ENCODE measurements at regions of chr5 and their contacts with region 1.

Region 1: DNA sequence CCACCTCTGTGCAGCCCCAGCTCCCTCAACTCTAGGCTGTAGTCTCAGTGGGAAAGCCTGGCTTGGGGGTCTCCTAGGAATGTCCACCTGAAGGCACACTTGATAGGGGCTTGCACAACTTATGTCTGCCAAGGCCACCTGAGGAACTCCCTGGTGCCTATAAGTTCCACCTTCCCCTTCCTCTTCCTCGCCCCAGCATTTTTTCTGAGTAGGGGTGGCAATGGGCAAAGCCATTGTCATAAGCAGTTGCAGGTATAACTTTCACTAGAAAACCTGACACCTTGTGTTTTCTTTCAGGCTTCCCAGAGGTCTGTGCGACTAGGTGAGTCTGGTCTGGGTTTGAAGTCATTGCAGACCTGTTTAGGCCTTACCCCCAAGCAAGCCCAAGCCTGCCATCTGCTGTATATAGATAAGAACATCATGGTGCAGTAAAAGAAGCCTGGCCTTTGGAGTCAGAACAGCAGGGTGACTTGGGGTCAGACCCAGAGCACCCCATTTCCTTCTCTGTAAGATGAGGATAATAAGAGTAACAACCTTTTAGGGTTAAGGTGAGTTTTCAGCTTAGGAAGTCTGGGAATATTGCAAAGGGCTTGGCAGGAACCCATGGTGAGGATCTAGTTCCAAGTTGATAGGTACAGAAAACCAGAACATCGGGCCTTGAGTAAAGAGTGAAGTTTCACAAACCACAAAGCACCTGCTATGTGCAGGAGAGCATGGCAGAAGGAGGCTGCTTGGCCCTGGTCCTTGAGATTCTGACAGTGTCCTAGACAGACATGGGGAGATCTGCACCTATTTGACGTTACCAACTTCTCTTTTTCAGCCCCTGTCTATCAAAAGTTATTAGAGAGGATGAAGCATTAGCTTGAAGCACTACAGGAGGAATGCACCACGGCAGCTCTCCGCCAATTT is 33.8 kb downstream of the TGFBI start:
- DNase-seq: peak; percentile 68 to 69
- H3K4me3 ChIP-seq: no peak overlapping the region
- H3K4me3 Mint-ChIP-seq: no peak overlapping the region
- H3K27ac Mint-ChIP-seq: no peak overlapping the region
- H3K4me1 ChIP-seq: peaks cover 30% of the 10 kb centered on the region
- H3K4me1 Mint-ChIP-seq: peaks cover 44% of the 10 kb centered on the region
- H3K27me3 ChIP-seq: no peaks in the 10 kb centered on the region
- H3K27me3 Mint-ChIP-seq: no peaks in the 10 kb centered on the region
- CTCF ChIP-seq: peak; percentile 53 to 56

Region 2: DNA sequence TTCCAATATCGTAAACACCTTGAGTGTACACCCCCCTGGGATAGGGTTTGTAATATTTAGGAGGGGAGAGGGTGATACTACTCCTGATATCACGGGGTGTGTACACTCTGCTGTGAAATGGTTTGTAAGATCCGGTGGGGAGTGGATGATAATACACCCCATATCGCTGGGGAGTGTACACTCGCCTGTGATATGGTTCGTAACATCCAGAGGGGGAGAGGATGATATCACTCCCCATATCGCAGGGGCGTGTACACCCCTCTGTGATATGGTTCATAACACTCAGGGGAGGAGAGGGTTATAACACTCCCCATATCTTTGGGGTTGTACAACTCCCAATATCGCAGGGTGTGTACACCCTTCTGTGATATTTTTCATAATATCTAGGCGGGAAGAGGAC is 262.0 kb before region 1 on chr5:
- CTCF ChIA-PET with region 1: no interaction called
- POLR2A ChIA-PET with region 1: no interaction called
- intact Hi-C with region 1: no loop called
- DNase-seq: no peak
- H3K4me3 ChIP-seq: no peak overlapping the region
- H3K4me3 Mint-ChIP-seq: no peak overlapping the region
- H3K27ac Mint-ChIP-seq: no peak overlapping the region
- H3K4me1 ChIP-seq: no peaks in the 10 kb centered on the region
- H3K4me1 Mint-ChIP-seq: no peaks in the 10 kb centered on the region
- H3K27me3 ChIP-seq: no peaks in the 10 kb centered on the region
- H3K27me3 Mint-ChIP-seq: peaks cover 18% of the 10 kb centered on the region
- CTCF ChIP-seq: no peak

Region 3: DNA sequence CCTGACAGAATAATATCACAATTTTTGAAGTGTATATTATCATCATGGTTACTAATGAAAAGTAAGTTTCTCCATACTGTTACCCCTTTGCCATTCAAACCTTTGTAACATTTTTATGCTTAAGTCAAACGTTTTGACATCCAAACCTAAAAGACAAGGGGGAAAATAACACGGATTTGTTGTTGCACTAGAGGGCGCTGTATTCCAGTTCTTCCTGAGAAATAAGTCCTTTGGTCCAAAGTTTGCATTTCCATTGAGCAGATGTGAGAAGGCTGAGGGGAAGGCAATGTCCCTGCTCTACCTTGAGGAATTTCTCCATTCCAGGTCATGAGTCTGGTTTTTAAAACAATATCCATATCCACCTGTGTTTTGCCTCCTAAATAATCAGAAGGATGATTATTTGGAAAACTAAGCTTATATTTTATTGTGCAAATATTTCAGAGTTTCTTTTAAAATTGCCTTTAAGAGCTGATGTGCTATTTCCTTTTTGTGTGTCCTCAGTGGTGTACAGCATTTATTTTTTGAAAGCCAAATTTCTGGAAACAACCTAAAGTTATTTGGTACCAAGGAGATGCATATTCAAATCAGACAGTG is 117.6 kb before region 1 on chr5:
- CTCF ChIA-PET with region 1: interaction called, 3 read pairs
- POLR2A ChIA-PET with region 1: no interaction called
- intact Hi-C with region 1: loop called (anchors 1 kb)
- DNase-seq: peak; percentile 60 to 76
- H3K4me3 ChIP-seq: no peak overlapping the region
- H3K4me3 Mint-ChIP-seq: no peak overlapping the region
- H3K27ac Mint-ChIP-seq: no peak overlapping the region
- H3K4me1 ChIP-seq: peaks cover under 1% of the 10 kb centered on the region; the same call in 1 of the 2 replicates
- H3K4me1 Mint-ChIP-seq: no peaks in the 10 kb centered on the region
- H3K27me3 ChIP-seq: no peaks in the 10 kb centered on the region
- H3K27me3 Mint-ChIP-seq: no peaks in the 10 kb centered on the region
- CTCF ChIP-seq: peak; percentile 79 to 80

Region 4: GRCh38 chr5:136014049-136015002 is 48.3 kb before region 1 on chr5:
- CTCF ChIA-PET with region 1: interaction called, 3 read pairs
- POLR2A ChIA-PET with region 1: no interaction called
- intact Hi-C with region 1: loop called (anchors 5 kb)
- DNase-seq: no peak
- H3K4me3 ChIP-seq: no peak overlapping the region
- H3K4me3 Mint-ChIP-seq: no peak overlapping the region
- H3K27ac Mint-ChIP-seq: no peak overlapping the region
- H3K4me1 ChIP-seq: 0 out of 2 replicates have a peak, but pooled peaks cover 3% of the 10 kb centered on the region
- H3K4me1 Mint-ChIP-seq: no peaks in the 10 kb centered on the region
- H3K27me3 ChIP-seq: no peaks in the 10 kb centered on the region
- H3K27me3 Mint-ChIP-seq: peaks cover 3% of the 10 kb centered on the region
- CTCF ChIP-seq: no peak

Region 5: GRCh38 chr5:136082390-136083193 is 20.0 kb after region 1 on chr5:
- CTCF ChIA-PET with region 1: interaction called, 3 read pairs
- POLR2A ChIA-PET with region 1: no interaction called
- intact Hi-C with region 1: loop called (anchors 1 kb)
- DNase-seq: peak; percentile 78 to 85
- H3K4me3 ChIP-seq: no peak overlapping the region
- H3K4me3 Mint-ChIP-seq: no peak overlapping the region
- H3K27ac Mint-ChIP-seq: no peak overlapping the region
- H3K4me1 ChIP-seq: peaks cover 11% of the 10 kb centered on the region
- H3K4me1 Mint-ChIP-seq: no peaks in the 10 kb centered on the region
- H3K27me3 ChIP-seq: no peaks in the 10 kb centered on the region
- H3K27me3 Mint-ChIP-seq: no peaks in the 10 kb centered on the region
- CTCF ChIP-seq: peak; percentile 88

Region 6: GRCh38 chr5:136174021-136174659 is 111.5 kb after region 1 on chr5:
- CTCF ChIA-PET with region 1: interaction called, 8 read pairs
- POLR2A ChIA-PET with region 1: no interaction called
- intact Hi-C with region 1: loop called (anchors 1 kb)
- DNase-seq: peak in 1 of 2 experiments; percentile 63
- H3K4me3 ChIP-seq: no peak overlapping the region
- H3K4me3 Mint-ChIP-seq: no peak overlapping the region
- H3K27ac Mint-ChIP-seq: no peak overlapping the region
- H3K4me1 ChIP-seq: no peaks in the 10 kb centered on the region; the same call in 1 of the 2 replicates
- H3K4me1 Mint-ChIP-seq: peaks cover 6% of the 10 kb centered on the region
- H3K27me3 ChIP-seq: no peaks in the 10 kb centered on the region
- H3K27me3 Mint-ChIP-seq: no peaks in the 10 kb centered on the region
- CTCF ChIP-seq: peak; percentile 68 to 84

Measured in Caco-2 (cell line).